Natural killer cell (primary cell): ENCODE measurements at regions of chr16 and their contacts with region 1.

Region 1: GRCh38 chr16:58025351-58026138 is at the start of gene MMP15:
- DNase-seq: peak; percentile 35 to 71
- ATAC-seq: peak; percentile 66 to 71 (median 68)
- H3K4me3 ChIP-seq: peak within 1 kb of the TSS; percentile 68
- H3K4me3 Mint-ChIP-seq: peak within 1 kb of the TSS; percentile 86
- H3K27ac ChIP-seq: no peak within 1 kb of the TSS
- H3K27ac Mint-ChIP-seq: peak within 1 kb of the TSS in 1 of 2 donors; percentile 81
- H3K4me1 ChIP-seq: peaks cover 27% of the 10 kb centered on the region
- H3K4me1 Mint-ChIP-seq: peaks cover 0 to 11% of the 10 kb centered on the region in 2 donors
- H3K27me3 ChIP-seq: peaks cover 10% of the 10 kb centered on the region
- H3K27me3 Mint-ChIP-seq: peaks cover 14 to 19% of the 10 kb centered on the region in 2 donors
- CTCF ChIP-seq: no peak
- total RNA-seq, gene MMP15: 0.23 to 0.27 (median 0.24) TPM

Region 2: DNA sequence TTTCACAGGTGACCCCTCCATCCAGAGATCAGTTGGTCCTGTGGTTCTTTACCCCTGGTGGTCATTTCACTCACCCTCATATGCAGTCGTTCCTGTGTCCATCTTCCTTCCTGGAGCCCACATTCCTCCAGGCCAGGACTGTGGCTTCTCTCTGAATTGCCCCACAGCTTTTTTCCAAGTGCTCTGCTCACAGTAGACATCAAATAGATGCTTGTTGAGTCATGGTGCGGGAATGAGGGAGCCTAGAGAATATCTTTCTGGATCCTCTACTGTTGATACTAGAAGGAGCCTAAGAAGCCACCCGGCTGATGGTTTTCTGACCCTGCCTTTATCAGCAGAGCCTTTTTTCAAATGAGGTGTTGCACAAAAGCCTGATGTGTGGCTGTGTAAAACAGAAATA is 13.9 kb before region 1 on chr16:
- intact Hi-C with region 1: no loop called
- DNase-seq: no peak
- ATAC-seq: no peak
- H3K4me3 ChIP-seq: no peak overlapping the region
- H3K4me3 Mint-ChIP-seq: no peak overlapping the region
- H3K27ac ChIP-seq: no peak overlapping the region
- H3K27ac Mint-ChIP-seq: no peak overlapping the region
- H3K4me1 ChIP-seq: no peaks in the 10 kb centered on the region
- H3K4me1 Mint-ChIP-seq: peaks cover 0 to 10% of the 10 kb centered on the region in 2 donors
- H3K27me3 ChIP-seq: no peaks in the 10 kb centered on the region
- H3K27me3 Mint-ChIP-seq: no peaks in the 10 kb centered on the region
- CTCF ChIP-seq: no peak

Region 3: GRCh38 chr16:58129097-58129936 is 103.8 kb after region 1 on chr16 and contains the start of gene CFAP20:
- intact Hi-C with region 1: loop called (anchors 2 kb)
- DNase-seq: peak; percentile 94 to 98
- ATAC-seq: peak; percentile 86 to 95 (median 94)
- H3K4me3 ChIP-seq: peak within 1 kb of the TSS; percentile 94
- H3K4me3 Mint-ChIP-seq: peak within 1 kb of the TSS; percentile 99
- H3K27ac ChIP-seq: peak within 1 kb of the TSS; percentile 88
- H3K27ac Mint-ChIP-seq: peak within 1 kb of the TSS; percentile 93 to 95
- H3K4me1 ChIP-seq: peaks cover 25% of the 10 kb centered on the region
- H3K4me1 Mint-ChIP-seq: peaks cover 42% of the 10 kb centered on the region in 2 donors
- H3K27me3 ChIP-seq: no peaks in the 10 kb centered on the region
- H3K27me3 Mint-ChIP-seq: no peaks in the 10 kb centered on the region
- CTCF ChIP-seq: no peak
- total RNA-seq, gene CFAP20: 57.9 to 137 (median 64.7) TPM

Region 4: DNA sequence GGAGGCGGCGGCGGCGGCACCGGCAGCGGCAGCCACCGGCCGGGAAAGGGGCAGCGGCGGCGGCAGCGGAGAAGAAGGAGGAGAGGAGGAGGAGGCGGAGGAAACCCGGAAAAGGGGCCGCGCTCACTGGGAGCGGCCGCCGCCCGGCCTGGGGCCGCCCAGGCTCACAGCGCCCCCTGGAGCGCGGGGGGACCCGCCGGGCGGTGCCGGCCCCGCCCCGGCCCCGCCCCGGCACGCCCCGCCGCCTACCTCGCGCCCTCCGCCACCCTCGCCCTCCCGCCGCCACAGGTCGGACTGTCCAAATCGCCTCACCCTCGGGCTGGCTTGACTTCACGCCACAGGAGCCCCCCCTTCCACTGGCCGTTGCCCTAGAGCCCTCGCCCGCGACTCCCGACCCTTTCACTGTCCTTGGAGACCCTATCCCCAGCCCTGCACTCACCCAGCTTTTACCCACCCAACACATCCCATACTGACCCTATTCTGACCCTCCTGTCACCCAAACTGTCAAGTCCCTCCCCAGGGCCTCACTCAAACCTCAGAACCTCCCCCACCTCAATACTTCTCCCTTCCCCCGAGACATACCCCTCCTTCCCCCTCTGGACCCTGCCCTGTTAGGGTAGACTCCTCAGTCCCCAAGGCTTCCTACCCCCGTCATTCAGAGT is 172.6 kb after region 1 on chr16 and contains the start of gene CSNK2A2:
- intact Hi-C with region 1: loop called (anchors 10 kb)
- DNase-seq: peak; percentile 62 to 87
- ATAC-seq: peak; percentile 95 to 97 (median 96)
- H3K4me3 ChIP-seq: peak within 1 kb of the TSS; percentile 48
- H3K4me3 Mint-ChIP-seq: peak within 1 kb of the TSS; percentile 89
- H3K27ac ChIP-seq: no peak within 1 kb of the TSS
- H3K27ac Mint-ChIP-seq: peak within 1 kb of the TSS; percentile 58 to 84
- H3K4me1 ChIP-seq: peaks cover 18% of the 10 kb centered on the region
- H3K4me1 Mint-ChIP-seq: peaks cover 45 to 50% of the 10 kb centered on the region in 2 donors
- H3K27me3 ChIP-seq: no peaks in the 10 kb centered on the region
- H3K27me3 Mint-ChIP-seq: peaks cover 5 to 9% of the 10 kb centered on the region in 2 donors
- CTCF ChIP-seq: no peak
- total RNA-seq, gene CSNK2A2: 53.2 to 61.1 (median 59.9) TPM

Region 5: DNA sequence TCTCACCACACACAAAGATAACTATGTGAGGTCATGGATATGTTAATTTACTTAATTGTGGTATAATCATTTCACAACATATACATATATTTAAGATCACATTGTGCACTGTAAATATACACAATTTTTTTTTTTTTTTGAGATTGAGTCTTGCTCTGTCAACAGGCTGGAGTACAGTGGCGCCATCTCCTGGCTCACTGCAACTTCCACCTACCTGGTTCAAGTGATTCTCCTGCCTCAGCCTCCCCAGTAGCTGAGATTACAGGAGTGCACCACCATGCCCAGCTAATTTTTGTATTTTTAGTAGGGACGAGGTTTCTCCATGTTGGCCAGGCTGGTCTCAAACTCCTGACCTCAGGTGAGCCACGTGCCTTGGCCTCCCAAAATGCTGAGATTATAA is 280.8 kb after region 1 on chr16:
- intact Hi-C with region 1: loop called (anchors 2 kb)
- DNase-seq: peak; percentile 38 to 67
- ATAC-seq: peak in 2 of 3 donors; percentile 31 to 42
- H3K4me3 ChIP-seq: no peak overlapping the region
- H3K4me3 Mint-ChIP-seq: no peak overlapping the region
- H3K27ac ChIP-seq: no peak overlapping the region
- H3K27ac Mint-ChIP-seq: no peak overlapping the region
- H3K4me1 ChIP-seq: no peaks in the 10 kb centered on the region
- H3K4me1 Mint-ChIP-seq: no peaks in the 10 kb centered on the region
- H3K27me3 ChIP-seq: no peaks in the 10 kb centered on the region
- H3K27me3 Mint-ChIP-seq: peaks cover 15 to 18% of the 10 kb centered on the region in 2 donors
- CTCF ChIP-seq: peak; percentile 72